ENCODE measurements at regions of chr2 and their contacts with region 1.

Region 1: DNA sequence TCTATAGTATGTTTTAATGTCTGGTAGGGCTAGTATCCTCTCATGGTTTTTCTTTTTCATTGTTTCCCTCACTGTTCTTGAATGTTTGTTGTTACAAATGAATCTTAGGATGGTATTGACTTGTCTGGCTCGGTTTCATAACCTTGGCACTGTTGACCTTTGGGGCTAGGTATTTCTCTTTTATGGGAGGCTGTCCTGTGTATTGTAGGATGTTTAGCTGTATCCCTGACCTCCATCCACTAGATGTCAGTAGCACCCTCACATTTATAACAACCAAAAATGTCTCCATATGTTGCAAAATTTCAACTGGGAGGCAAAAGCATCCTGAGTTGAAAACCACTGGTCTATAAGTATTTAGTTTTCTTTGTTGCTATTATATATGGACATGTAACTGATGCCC is 7.0 kb upstream of the AOX1 start:
- DNase-seq: no peak
- H3K4me3 Mint-ChIP-seq: no peak overlapping the region
- H3K27ac Mint-ChIP-seq: no peak overlapping the region
- H3K4me1 Mint-ChIP-seq: no peaks in the 10 kb centered on the region
- H3K27me3 Mint-ChIP-seq: no peaks in the 10 kb centered on the region
- CTCF ChIP-seq: peak; percentile 51

Region 2: DNA sequence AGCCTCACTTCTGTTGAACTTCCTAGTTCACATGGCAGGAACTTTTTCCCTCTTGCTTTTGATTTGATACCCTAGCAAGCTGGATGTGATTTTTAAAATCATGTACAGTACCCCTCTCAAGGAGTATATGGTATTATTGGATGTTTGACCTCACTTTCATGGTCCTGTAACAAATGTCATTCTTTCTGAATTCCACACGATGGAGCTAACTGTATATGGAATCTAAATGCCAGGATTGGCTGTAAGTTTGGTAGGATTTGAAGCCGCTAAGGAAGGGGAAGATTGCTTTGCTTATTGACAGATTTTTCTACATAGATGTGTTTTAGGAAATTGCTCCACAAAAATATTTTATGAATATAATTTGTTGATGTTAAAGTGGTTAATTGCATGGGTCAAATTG is 605.1 kb before region 1 on chr2:
- CTCF ChIA-PET with region 1: no interaction called
- intact Hi-C with region 1: loop called (anchors 5 kb)
- DNase-seq: no peak
- H3K4me3 Mint-ChIP-seq: no peak overlapping the region
- H3K27ac Mint-ChIP-seq: peak overlapping the region; percentile 48
- H3K4me1 Mint-ChIP-seq: peaks cover 48% of the 10 kb centered on the region
- H3K27me3 Mint-ChIP-seq: no peaks in the 10 kb centered on the region
- CTCF ChIP-seq: peak; percentile 53

Region 3: DNA sequence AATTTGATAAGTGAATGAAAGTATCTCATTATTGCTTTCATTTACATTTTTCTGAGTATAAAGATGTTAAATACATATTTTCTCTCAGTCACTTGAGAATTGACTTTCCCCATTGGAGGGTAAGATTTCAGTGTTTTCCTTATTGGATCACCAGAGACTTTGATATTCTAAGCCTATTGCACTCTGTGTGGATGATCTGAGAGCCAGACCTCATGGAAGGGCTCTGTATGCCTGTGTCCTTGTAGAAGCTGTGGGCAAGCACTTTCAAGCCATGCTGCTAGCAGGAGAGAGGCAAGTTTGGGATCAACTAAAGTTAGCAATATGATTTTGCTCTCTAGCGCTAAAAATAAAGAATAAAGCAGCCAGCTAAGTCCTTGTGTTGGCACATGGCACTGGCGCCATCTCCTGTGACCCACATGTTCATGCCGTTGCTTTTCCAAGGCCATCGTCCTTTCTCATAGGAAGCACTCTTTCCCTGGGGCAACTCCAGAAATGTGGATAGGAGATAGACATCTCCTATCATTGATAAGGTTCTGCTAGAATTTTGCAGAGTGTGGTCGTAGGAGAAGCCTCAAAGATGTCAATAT is 79.6 kb after region 1 on chr2:
- CTCF ChIA-PET with region 1: no interaction called
- intact Hi-C with region 1: loop called (anchors 2 kb)
- DNase-seq: no peak
- H3K4me3 Mint-ChIP-seq: no peak overlapping the region
- H3K27ac Mint-ChIP-seq: no peak overlapping the region
- H3K4me1 Mint-ChIP-seq: peaks cover 16% of the 10 kb centered on the region
- H3K27me3 Mint-ChIP-seq: peaks cover 20% of the 10 kb centered on the region
- CTCF ChIP-seq: no peak

Region 4: DNA sequence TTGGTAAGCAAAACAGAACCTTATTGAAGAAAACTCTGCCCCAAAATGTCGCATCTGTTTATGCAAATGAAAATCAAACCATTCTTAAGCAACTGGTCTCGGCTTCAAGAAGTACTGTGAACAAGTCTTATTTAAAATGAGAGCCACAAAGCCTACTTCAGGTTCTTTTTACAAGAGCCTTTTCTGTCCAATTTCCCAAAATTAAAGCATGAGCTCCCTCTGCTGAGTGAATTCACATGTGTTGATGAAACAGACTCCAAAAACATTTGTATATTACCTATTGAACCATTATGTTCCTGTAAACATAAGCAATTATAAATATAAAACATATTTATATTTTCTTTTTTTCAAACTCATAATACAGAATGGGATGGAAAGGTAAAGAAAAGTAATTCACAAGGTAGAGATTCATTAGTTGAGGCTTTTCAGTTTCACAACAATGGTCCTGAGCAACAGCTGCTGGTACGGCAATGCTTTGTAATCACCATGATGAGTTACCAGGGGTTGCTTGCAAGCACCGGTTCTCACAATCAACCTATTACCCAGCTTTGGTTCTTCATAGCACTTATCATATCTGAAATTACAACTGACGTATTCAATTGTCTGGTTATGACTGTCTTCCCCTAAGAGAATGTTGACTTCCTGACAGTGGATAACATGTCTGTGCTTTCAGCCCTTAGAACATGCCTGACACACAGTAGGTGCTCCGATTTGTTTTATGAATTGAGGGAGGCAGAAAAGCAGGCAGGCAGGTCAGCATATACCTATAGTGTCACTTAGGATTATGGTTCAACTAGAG is 124.5 kb after region 1 on chr2:
- CTCF ChIA-PET with region 1: interaction called, 12 read pairs
- intact Hi-C with region 1: loop called (anchors 1 kb)
- DNase-seq: peak; percentile 53
- H3K4me3 Mint-ChIP-seq: no peak overlapping the region
- H3K27ac Mint-ChIP-seq: no peak overlapping the region
- H3K4me1 Mint-ChIP-seq: peaks cover 12% of the 10 kb centered on the region
- H3K27me3 Mint-ChIP-seq: peaks cover 16% of the 10 kb centered on the region
- CTCF ChIP-seq: peak; percentile 50

Region 5: DNA sequence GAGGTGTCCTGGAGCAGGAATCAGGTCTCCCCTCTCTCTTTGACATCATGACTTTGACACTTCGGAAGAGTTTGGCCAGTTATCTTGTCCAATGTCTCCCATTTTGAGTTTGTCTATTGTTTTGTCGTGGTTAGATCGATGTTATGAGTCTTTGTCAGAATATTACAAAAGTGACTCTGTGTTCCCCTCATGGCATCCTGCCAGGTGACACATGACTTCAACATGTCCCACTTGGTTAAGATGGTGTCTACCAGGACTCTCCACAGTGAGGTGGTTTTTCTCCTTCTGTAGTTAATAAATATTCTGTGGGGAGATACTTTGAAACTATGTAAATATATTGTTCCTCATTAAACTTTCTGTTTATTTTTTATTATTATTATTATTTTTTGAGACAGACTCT is 156.3 kb after region 1 on chr2:
- CTCF ChIA-PET with region 1: interaction called, 5 read pairs
- intact Hi-C with region 1: loop called (anchors 1 kb)
- DNase-seq: no peak
- H3K4me3 Mint-ChIP-seq: no peak overlapping the region
- H3K27ac Mint-ChIP-seq: no peak overlapping the region
- H3K4me1 Mint-ChIP-seq: peaks cover 11% of the 10 kb centered on the region
- H3K27me3 Mint-ChIP-seq: no peaks in the 10 kb centered on the region
- CTCF ChIP-seq: no peak

Measured in Calu3 (cell line).